PC-9 (cell line): ENCODE measurements at regions of chr9 and their contacts with region 1.

Region 1: GRCh38 chr9:340519-340918 is 125.9 kb downstream of the DOCK8 start:
- DNase-seq: peak in 1 of 2 experiments; percentile 47
- H3K4me3 ChIP-seq: no peak overlapping the region
- H3K27ac ChIP-seq: no peak overlapping the region
- H3K4me1 ChIP-seq: peaks cover 11% of the 10 kb centered on the region
- H3K27me3 ChIP-seq: no peaks in the 10 kb centered on the region
- CTCF ChIP-seq: no peak

Region 2: GRCh38 chr9:1939926-1940368 is 1599.4 kb after region 1 on chr9:
- CTCF ChIA-PET with region 1: no interaction called
- POLR2A ChIA-PET with region 1: interaction called, 13 read pairs
- intact Hi-C with region 1: no loop called
- DNase-seq: no peak
- H3K4me3 ChIP-seq: no peak overlapping the region
- H3K27ac ChIP-seq: no peak overlapping the region
- H3K4me1 ChIP-seq: no peaks in the 10 kb centered on the region
- H3K27me3 ChIP-seq: no peaks in the 10 kb centered on the region; the same call in 1 of the 2 replicates
- CTCF ChIP-seq: peak; percentile 53